ENCODE measurements at regions of chr14 and their contacts with region 1.

Region 1: DNA sequence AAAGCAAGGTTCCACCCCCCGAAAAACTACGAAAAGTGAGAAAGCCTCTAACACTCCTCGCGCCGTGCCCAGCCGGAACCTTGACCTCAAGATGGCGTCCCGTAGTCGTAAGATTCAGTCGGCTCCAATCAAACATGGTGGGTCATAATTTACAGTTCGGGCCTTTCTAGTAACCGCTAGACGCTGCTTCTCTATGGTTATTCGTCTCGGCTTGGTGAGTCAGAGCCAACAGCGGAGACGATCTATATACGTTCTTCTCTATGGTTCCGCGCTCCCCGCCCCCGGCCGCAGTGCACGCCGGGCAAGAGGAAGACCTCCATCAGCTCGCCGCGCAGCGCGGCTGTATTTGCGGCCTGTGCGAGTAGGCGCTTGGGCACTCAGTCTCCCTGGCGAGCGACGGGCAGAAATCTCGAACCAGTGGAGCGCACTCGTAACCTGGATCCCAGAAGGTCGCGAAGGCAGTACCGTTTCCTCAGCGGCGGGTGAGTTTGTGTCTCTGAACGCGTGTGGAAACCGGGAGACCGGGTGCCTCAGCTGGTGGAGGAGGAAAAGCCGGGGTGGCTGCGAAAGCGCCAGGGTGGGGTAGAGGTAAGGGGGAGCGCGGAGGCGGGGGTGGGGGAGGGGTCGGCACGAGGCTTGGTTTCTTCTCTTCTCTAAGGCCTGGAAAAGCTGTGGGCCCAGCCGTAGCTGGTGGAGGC is at the start of gene RBM25:
- DNase-seq: peak; percentile 98
- H3K4me3 ChIP-seq: peak within 1 kb of the TSS; percentile 90 to 92 (median 91)
- H3K27ac ChIP-seq: peak within 1 kb of the TSS; percentile 96
- H3K4me1 ChIP-seq: peaks cover 14% of the 10 kb centered on the region
- H3K27me3 ChIP-seq: no peaks in the 10 kb centered on the region
- CTCF ChIP-seq: no peak
- total RNA-seq, gene RBM25: 27.2 to 87.7 TPM

Region 2: GRCh38 chr14:73026845-73027542 is 31.4 kb before region 1 on chr14 and contains the start of gene ZFYVE1:
- CTCF ChIA-PET with region 1: no interaction called
- dilution Hi-C with region 1: no loop called
- in situ Hi-C with region 1: no loop called
- intact Hi-C with region 1: loop called (anchors 1 kb)
- DNase-seq: peak; percentile 99
- H3K4me3 ChIP-seq: peak within 1 kb of the TSS; percentile 73 to 97 (median 79)
- H3K27ac ChIP-seq: peak within 1 kb of the TSS; percentile 75
- H3K4me1 ChIP-seq: peaks cover 10% of the 10 kb centered on the region
- H3K27me3 ChIP-seq: no peaks in the 10 kb centered on the region
- CTCF ChIP-seq: no peak
- total RNA-seq, gene ZFYVE1: 20.6 to 32.7 TPM

Region 3: GRCh38 chr14:73069585-73069984 is 11.2 kb after region 1 on chr14:
- CTCF ChIA-PET with region 1: no interaction called
- dilution Hi-C with region 1: no loop called
- in situ Hi-C with region 1: no loop called
- intact Hi-C with region 1: loop called (anchors 1 kb)
- DNase-seq: no peak
- H3K4me3 ChIP-seq: no peak overlapping the region
- H3K27ac ChIP-seq: no peak overlapping the region
- H3K4me1 ChIP-seq: no peaks in the 10 kb centered on the region
- H3K27me3 ChIP-seq: no peaks in the 10 kb centered on the region
- CTCF ChIP-seq: no peak

Region 4: GRCh38 chr14:73438993-73439392 is 380.6 kb after region 1 on chr14:
- CTCF ChIA-PET with region 1: no interaction called
- dilution Hi-C with region 1: no loop called
- in situ Hi-C with region 1: no loop called
- intact Hi-C with region 1: no loop called
- DNase-seq: no peak
- H3K4me3 ChIP-seq: no peak overlapping the region
- H3K27ac ChIP-seq: no peak overlapping the region
- H3K4me1 ChIP-seq: no peaks in the 10 kb centered on the region
- H3K27me3 ChIP-seq: no peaks in the 10 kb centered on the region
- CTCF ChIP-seq: no peak

Measured in mammary epithelial cell (primary cell).